ENCODE measurements at regions of chr18 and their contacts with region 1.

Region 1: GRCh38 chr18:46173393-46174341 is 69.5 kb downstream of the HAUS1 start:
- DNase-seq: peak; percentile 95
- ATAC-seq: peak; percentile 90
- H3K4me3 Mint-ChIP-seq: peak overlapping the region; percentile 97
- H3K27ac Mint-ChIP-seq: peak overlapping the region; percentile 99
- H3K4me1 Mint-ChIP-seq: peaks cover 63% of the 10 kb centered on the region
- H3K27me3 Mint-ChIP-seq: no peaks in the 10 kb centered on the region

Region 2: DNA sequence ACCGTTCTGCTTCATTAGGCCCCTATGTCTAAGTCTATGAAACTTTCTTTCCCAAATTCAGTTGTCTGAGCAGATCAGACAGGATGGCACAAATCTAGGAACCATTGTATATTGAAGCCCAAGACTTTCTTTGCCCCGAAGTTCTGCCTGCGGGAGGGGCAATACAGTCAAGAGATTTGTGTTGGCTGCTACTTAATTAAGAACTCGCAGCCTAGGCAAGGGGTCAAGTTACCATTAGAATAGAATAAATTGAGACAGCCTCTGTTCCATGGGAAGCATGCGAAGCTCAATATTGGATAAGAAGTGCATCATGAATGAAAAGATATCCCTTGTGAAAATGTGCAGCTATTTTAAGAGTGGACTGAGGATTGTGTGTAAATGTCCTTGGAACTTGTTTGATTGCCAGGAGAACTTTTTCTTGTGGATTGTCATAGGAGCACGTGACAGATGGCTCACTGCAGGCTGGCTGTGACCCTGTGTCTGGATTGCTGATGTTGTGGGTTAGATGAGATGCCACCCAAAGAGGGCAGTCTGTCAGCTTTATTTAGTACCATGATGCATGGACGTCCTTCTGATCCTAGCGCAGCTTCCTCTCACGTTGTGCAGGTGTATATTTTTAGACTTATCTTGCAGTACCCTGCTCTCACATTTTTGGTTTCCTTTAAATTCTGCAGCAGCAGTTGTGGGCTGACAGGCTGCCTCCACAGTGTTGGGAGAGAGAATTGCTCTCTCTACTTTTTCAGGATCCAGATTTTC is 38.6 kb before region 1 on chr18:
- CTCF ChIA-PET with region 1: interaction called, 11 read pairs
- POLR2A ChIA-PET with region 1: no interaction called
- DNase-seq: no peak
- ATAC-seq: no peak
- H3K4me3 Mint-ChIP-seq: no peak overlapping the region
- H3K27ac Mint-ChIP-seq: no peak overlapping the region
- H3K4me1 Mint-ChIP-seq: peaks cover 4% of the 10 kb centered on the region
- H3K27me3 Mint-ChIP-seq: no peaks in the 10 kb centered on the region

Region 3: DNA sequence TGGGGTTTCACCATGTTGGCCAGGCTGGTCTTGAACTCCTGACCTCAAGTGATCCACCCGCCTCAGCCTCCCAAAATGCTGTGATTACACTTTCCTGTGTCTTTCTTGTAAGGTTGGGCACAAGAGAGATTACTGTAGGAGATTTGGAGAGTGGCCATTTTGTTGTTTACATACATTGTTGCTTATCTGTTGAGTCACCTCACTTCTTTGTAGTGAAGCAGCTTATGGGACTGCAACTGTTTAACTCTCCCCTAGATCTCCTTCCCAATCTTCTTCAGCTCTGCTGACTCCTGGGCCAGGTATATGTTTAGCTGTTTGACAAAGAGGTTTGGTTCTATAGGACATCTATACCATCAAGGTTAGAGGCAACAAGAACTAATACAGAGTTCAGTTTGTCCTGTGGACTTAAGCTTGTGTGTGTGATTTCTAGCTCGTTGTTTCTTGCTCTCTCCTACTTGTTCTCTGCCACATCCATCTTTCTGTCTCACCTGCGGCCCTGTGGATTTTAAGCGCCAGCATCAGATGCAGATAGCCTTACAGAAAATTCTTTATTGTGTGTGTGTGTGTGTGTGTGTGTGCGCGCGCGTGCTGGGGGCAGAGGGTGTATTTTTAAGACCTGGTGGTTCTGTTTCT is 26.0 kb after region 1 on chr18:
- CTCF ChIA-PET with region 1: interaction called, 135 read pairs
- POLR2A ChIA-PET with region 1: interaction called, 6 read pairs
- DNase-seq: no peak
- ATAC-seq: peak; percentile 47
- H3K4me3 Mint-ChIP-seq: no peak overlapping the region
- H3K27ac Mint-ChIP-seq: no peak overlapping the region
- H3K4me1 Mint-ChIP-seq: peaks cover 51% of the 10 kb centered on the region
- H3K27me3 Mint-ChIP-seq: no peaks in the 10 kb centered on the region

Region 4: GRCh38 chr18:46226461-46226860 is 52.8 kb after region 1 on chr18:
- CTCF ChIA-PET with region 1: interaction called, 28 read pairs
- POLR2A ChIA-PET with region 1: interaction called, 6 read pairs
- DNase-seq: no peak
- ATAC-seq: no peak
- H3K4me3 Mint-ChIP-seq: no peak overlapping the region
- H3K27ac Mint-ChIP-seq: no peak overlapping the region
- H3K4me1 Mint-ChIP-seq: peaks cover 70% of the 10 kb centered on the region
- H3K27me3 Mint-ChIP-seq: no peaks in the 10 kb centered on the region

Region 5: DNA sequence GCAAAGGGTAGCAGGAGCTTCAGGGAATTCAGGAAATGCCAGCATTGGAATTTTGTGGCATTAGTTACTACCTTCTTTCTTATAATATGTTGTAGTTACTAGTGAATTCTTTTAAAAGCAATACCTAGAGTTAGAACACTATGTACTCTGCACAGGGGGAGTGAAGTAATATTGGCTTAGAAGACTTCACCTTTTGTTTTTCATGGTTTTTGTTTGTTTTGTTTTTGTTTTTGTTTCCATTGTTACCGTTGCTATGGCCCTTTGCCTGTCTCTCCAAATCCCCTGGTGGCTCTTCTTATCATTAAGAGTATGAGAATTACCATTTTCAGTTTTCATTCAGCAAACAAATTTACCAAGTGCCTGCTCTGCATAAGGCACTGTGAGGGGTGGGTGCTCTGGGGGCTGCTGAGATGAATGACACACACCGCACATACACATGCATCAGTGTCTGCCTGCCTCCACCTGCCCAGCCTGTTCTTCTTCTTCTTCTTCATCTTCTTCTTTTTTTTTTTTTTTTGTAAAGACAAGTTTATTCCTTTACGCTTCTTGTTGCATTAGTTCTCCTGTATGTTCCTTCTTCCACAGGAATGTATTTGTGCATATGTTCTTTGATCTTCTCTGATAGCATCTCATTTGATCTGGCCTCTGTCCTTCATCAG is 90.7 kb after region 1 on chr18:
- CTCF ChIA-PET with region 1: interaction called, 36 read pairs
- POLR2A ChIA-PET with region 1: interaction called, 7 read pairs
- DNase-seq: no peak
- ATAC-seq: peak; percentile 57
- H3K4me3 Mint-ChIP-seq: no peak overlapping the region
- H3K27ac Mint-ChIP-seq: no peak overlapping the region
- H3K4me1 Mint-ChIP-seq: peaks cover 73% of the 10 kb centered on the region
- H3K27me3 Mint-ChIP-seq: no peaks in the 10 kb centered on the region

Region 6: GRCh38 chr18:46481048-46481846 is 307.6 kb after region 1 on chr18:
- CTCF ChIA-PET with region 1: interaction called, 14 read pairs
- POLR2A ChIA-PET with region 1: no interaction called
- DNase-seq: peak; percentile 72
- ATAC-seq: peak; percentile 73
- H3K4me3 Mint-ChIP-seq: no peak overlapping the region
- H3K27ac Mint-ChIP-seq: no peak overlapping the region
- H3K4me1 Mint-ChIP-seq: peaks cover 5% of the 10 kb centered on the region
- H3K27me3 Mint-ChIP-seq: peaks cover 9% of the 10 kb centered on the region

Region 7: DNA sequence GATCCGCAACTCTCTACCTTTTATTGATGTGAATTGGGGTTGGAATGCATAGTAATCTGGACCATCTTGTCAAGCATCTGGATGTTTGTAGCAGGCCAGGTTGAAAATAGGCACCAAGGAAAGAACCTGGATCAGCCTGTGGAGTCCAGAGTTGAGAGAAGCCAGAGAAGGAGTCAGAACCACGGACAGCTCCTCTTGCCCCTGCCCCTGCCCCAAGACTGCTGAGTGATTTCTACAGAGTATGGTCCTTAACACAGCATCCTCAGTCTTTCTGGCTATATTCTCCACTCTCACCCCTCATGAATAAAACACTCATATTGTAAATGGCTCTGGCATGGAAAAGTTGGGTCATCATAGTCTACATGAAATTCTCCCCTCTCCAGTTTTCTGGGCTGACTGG is 328.8 kb after region 1 on chr18:
- CTCF ChIA-PET with region 1: no interaction called
- POLR2A ChIA-PET with region 1: no interaction called
- DNase-seq: peak; percentile 47
- ATAC-seq: no peak
- H3K4me3 Mint-ChIP-seq: no peak overlapping the region
- H3K27ac Mint-ChIP-seq: no peak overlapping the region
- H3K4me1 Mint-ChIP-seq: no peaks in the 10 kb centered on the region
- H3K27me3 Mint-ChIP-seq: peaks cover 2% of the 10 kb centered on the region

Measured in activated CD8-positive, alpha-beta T cell treated with anti-CD3 and anti-CD28 coated beads, Interleukin-2, amount 10 ng/mL, durations not matched to agents 7 days and 5 days (primary cell).